ENCODE measurements at regions of chr1 and their contacts with region 1.

Region 1: DNA sequence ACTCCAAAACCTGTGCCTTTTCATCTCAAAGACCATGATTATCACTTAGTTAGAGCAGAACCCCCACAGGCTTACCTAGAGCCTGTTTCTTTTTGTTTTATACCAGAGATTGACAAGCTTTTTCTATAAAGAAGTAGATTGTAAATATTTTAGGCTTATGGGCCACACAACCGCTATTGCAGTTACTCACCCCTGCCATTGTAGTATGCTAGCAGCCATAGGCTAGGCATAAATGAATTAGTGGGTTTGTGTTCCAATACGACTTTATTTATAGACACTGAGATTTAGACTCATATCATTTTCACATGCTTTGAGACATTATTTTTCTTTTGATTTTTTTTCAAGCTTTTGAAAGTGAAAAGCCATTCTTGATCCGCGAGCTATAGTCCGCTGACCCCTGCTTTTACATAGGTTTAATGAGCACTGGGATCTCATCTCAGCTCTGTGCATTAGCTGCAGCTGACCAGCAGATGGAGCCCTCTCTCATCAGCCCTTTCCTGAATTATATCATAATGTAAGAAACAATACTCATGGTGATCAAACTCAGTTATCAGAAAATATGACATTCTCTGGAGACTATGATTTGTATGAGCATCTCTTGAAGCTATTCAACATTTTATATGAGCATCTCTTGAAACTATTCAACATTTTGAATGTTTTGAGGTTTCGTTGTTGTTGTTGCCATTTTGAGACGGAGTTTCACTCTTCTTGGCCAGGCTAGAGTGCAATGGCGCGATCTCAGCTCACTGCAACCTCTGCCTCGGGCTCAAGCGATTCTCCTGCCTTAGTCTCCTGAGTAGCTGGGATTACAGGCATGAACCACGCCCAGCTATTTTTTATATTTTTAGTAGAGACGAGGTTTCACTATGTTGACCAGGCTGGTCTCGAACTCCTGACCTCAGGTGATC is 111.9 kb upstream of the L1TD1 start:
- DNase-seq: peak; percentile 77

Region 2: GRCh38 chr1:61995641-61996040 is 87.1 kb before region 1 on chr1:
- CTCF ChIA-PET with region 1: no interaction called
- POLR2A ChIA-PET with region 1: no interaction called
- DNase-seq: no peak

Region 3: DNA sequence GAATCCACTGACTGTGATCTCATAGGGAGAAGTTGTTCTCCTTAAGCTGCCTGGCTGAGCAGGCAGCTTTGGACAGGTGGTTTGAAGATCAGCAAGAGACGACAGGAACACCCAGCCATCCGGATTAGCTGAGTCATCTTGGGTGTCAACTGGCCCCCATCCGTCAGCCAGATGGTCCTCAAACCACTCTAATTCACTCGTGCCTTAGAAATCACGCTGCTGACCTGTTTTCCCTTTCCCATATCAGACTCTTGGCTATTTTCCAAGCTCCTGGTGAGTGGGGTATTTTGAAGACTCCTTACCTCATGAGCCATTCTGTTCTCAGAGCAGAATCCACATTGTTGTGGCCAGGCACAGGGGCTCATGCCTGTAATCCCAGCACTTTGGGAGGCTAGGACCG is 37.1 kb before region 1 on chr1:
- CTCF ChIA-PET with region 1: no interaction called
- POLR2A ChIA-PET with region 1: no interaction called
- DNase-seq: no peak

Region 4: GRCh38 chr1:62093261-62093660 is 10.6 kb after region 1 on chr1:
- CTCF ChIA-PET with region 1: interaction called, 10 read pairs
- POLR2A ChIA-PET with region 1: no interaction called
- DNase-seq: no peak